GM18951 (cell line): ENCODE measurements at regions of chr5 and their contacts with region 1.

Region 1: DNA sequence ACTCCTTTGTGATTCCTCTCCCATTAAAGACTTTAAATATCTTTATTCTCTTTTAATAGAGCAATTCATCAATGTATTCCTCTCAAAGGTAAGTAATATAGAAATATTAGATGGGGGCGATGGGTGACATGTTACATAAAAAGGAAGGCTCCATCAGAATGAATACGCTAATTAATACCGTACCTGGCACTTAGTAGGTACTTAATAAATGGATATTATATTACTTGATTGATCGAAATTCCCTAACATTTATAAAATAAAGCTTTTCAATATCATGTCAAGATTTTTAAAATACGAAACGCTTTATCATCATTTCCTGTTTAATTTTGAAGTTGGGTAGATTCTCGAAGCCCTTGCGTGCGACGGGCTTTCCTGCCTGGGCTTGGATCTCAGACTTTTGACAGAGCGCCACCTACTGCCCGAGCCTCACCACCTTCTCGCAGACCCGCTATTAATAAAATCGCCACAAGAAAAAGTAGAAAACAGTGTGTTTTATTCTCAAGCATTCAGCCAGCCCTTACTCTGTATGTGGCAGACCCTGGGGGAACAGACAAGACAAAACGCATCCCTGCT is 99.4 kb downstream of the C5orf15 start:
- POLR2A ChIP-seq: no peak

Region 2: GRCh38 chr5:133321833-133322420 is 547.1 kb before region 1 on chr5:
- in situ Hi-C with region 1: no loop called
- POLR2A ChIP-seq: no peak

Region 3: DNA sequence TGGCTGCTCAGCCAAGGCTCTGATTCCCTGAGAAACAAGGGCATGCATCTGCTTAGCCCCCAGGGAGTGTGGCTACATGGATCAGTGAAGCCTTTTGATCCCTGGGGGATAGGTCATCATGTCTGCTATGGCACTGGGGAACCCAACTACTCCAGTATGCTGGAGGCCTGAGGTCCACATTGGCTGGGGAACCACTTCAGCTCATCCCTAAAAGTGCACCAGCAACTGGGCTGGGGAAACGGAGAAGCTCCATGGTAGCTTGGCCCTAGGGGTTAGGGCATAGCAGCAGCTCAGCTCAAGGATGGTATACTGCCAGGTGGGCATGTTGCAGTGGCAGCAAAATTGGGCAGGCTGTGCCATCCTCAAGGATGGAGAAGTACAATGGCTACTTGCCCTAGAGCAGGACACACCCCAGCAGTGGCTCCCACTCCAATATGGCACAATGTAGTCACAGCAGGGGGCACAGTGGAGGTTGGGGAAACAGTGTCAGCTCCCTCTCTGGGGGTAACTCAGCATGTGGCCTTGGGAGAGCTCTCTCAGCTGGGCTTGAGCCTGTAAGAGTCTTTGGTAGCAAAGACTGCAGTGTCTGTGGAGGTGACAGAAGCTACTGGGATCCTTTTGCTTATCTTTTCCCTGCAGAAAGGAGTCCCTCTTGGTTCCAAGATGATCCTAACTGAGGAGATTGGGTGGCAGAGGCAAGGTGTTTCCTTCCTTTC is 145.2 kb before region 1 on chr5:
- in situ Hi-C with region 1: no loop called
- POLR2A ChIP-seq: no peak

Region 4: GRCh38 chr5:133754575-133755169 is 114.4 kb before region 1 on chr5:
- in situ Hi-C with region 1: loop called (anchors 10 kb)
- POLR2A ChIP-seq: no peak